ENCODE measurements at regions of chr1 and their contacts with region 1.

Region 1: DNA sequence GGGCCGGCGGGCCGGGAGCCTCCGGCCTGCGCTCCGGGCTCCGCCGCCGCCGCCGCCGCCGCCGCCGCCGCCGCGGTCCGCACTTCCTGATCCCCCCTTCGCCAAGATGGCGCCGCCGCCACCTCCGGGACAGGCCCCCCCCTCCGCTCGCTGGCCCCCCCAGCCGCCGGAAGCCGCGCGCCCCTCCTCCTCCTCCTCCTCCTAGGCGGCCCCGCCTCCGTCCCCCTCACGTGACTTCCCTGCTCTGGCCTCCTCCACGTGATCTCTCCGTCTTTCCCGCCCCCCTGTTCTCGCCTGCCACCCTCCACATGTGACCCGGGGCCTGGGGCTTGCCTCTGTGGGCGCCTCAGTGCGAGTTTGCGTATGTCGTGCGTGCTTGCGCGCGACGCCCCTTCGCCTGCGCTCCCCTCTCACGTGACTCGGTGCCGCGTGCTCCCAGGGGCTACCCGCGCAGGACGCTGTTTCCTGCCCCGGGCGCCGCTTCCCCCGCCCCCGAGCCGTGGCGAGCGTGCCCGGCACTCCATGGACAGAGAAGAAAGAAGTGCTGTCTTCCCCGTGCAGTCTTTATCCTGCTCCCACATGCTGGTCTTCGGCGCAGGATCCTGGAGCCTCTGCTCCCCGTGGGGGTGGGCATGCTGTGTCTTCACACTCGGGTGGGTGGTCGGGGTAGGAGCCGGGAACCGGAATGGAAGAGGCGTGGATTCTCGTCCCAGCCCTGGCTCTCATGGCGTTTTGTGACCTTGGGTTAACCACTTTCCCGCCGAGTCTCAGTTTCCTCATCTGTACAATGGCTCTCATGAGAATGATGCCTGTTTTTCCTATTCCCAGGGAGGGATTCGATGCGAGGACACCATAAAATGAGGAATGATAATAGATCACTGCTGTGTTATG is at the start of gene UBE2Q1:
- DNase-seq: peak; percentile 100
- ATAC-seq: peak; percentile 97
- total RNA-seq, gene UBE2Q1: 53.2 TPM

Region 2: GRCh38 chr1:154627257-154628120 is 68.7 kb after region 1 on chr1:
- intact Hi-C with region 1: loop called (anchors 5 kb)
- DNase-seq: peak; percentile 95
- ATAC-seq: peak; percentile 80

Region 3: DNA sequence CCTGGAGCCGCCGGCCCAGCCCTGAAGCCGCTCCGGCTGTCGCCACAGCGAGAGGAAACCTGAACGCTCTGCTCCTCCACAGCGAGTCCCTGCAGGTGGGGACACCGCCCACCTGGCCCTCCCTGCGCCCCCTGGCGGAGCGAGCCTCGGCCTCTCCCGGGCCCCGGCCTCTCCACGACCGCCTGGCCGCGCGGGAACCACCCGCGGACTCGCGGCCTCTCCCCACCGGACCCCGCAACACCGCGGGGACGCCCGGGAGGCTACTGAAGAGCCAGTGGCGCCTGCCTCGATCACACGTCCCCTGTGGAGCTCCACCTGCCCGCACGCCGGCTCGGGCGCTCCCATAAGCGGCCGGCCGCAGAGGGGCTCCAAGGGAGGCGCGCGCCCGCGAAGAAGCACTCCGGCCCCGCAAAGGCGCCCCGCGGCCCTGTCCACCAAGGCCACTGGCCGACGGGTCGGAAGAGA is 201.7 kb after region 1 on chr1:
- intact Hi-C with region 1: loop called (anchors 5 kb)
- DNase-seq: peak; percentile 86
- ATAC-seq: peak; percentile 79

Region 4: GRCh38 chr1:154837672-154838171 is 278.9 kb after region 1 on chr1:
- intact Hi-C with region 1: no loop called
- DNase-seq: peak; percentile 83
- ATAC-seq: peak; percentile 84

Region 5: DNA sequence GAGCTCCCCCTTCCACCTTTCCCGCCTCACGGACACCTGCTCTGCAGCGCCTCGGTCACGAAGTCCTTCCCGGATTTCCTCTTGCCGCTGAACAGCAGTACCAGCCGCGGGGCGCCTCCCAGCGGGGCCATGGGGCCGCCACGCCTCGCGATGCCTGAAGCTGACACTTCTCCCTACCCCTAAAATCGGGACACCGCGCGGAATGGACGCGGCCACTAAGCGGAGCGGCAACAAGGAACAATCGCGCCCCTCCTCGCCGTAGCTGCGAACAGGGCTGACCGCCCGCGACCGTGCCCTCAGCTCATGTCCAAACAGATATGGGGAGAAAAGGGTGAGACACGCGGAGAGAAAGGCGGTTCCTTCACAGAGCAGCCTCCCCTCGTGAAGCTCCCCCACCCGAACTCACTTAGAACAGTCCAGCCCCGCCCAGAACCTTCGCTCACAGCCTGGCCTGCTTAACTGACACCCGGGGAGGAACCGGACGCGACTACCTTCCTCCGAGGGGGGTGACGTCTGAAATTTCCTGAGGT is 377.8 kb after region 1 on chr1 and contains the start of gene PMVK:
- intact Hi-C with region 1: loop called (anchors 2 kb)
- DNase-seq: peak; percentile 97
- ATAC-seq: peak; percentile 96
- total RNA-seq, gene PMVK: 71.1 TPM

Measured in Right ventricle myocardium inferior (tissue), 1 donor.